Colonic mucosa (tissue), 4 donors: ENCODE measurements at regions of chr14 and their contacts with region 1.

Region 1: GRCh38 chr14:49892636-49893308 is at the start of gene ARF6:
- DNase-seq: peak; percentile 99
- H3K4me3 ChIP-seq: peak within 1 kb of the TSS; percentile 92
- H3K27ac ChIP-seq: peak within 1 kb of the TSS; percentile 100
- H3K4me1 ChIP-seq: peaks cover 3% of the 10 kb centered on the region
- H3K27me3 ChIP-seq: no peaks in the 10 kb centered on the region
- CTCF ChIP-seq: no peak
- total RNA-seq, gene ARF6: 136 to 161 TPM

Region 2: GRCh38 chr14:49808780-49809179 is 84.0 kb before region 1 on chr14:
- intact Hi-C with region 1: no loop called
- DNase-seq: no peak
- H3K4me3 ChIP-seq: no peak overlapping the region
- H3K27ac ChIP-seq: no peak overlapping the region
- H3K4me1 ChIP-seq: no peaks in the 10 kb centered on the region
- H3K27me3 ChIP-seq: no peaks in the 10 kb centered on the region
- CTCF ChIP-seq: no peak

Region 3: DNA sequence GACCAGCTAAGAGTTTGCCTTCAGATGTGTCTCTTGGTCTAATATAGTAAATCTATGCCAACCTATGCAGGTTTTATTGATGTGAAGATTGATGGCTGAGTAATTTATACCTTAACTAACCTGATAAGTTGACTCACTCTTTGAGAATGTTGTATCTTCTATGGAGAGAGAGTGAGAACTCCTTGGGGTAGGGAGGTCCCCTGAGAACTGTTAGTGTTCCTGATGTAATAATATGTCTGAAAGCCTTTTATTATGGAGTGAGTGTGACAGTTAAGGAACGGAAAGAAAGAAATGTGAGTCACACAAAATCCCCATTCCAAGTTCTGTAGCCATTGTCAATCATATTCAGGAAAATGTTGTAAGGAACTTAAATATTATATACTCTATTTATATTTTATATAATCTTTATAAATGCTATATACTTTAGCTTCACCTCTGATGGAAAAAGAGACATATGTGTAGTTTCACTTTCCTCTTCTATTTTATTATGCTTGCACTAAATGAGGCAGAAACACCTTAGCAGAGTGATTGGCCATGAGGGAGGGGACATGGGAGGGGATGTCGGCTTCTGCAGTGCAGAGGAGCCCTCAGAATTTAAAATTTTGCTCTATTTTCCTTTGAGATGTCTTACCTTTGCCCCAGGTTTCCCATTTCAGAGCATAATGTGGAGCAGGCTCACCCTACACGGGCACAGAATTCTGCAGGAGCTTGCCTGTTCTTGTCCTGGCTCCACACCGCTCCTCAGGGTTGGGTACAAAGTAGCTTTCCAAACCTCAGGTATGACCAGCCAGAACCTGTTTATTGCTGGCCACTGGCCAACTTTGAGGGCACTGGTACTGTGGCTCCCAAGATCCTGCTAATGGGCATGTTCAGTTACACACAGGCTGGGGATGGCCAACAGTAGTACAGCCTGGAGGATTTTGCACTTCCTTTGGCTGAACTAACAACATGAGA is 57.8 kb after region 1 on chr14:
- intact Hi-C with region 1: loop called (anchors 5 kb)
- DNase-seq: peak; percentile 93
- H3K4me3 ChIP-seq: no peak overlapping the region
- H3K27ac ChIP-seq: peak overlapping the region; percentile 82
- H3K4me1 ChIP-seq: peaks cover 8% of the 10 kb centered on the region
- H3K27me3 ChIP-seq: no peaks in the 10 kb centered on the region
- CTCF ChIP-seq: no peak

Region 4: DNA sequence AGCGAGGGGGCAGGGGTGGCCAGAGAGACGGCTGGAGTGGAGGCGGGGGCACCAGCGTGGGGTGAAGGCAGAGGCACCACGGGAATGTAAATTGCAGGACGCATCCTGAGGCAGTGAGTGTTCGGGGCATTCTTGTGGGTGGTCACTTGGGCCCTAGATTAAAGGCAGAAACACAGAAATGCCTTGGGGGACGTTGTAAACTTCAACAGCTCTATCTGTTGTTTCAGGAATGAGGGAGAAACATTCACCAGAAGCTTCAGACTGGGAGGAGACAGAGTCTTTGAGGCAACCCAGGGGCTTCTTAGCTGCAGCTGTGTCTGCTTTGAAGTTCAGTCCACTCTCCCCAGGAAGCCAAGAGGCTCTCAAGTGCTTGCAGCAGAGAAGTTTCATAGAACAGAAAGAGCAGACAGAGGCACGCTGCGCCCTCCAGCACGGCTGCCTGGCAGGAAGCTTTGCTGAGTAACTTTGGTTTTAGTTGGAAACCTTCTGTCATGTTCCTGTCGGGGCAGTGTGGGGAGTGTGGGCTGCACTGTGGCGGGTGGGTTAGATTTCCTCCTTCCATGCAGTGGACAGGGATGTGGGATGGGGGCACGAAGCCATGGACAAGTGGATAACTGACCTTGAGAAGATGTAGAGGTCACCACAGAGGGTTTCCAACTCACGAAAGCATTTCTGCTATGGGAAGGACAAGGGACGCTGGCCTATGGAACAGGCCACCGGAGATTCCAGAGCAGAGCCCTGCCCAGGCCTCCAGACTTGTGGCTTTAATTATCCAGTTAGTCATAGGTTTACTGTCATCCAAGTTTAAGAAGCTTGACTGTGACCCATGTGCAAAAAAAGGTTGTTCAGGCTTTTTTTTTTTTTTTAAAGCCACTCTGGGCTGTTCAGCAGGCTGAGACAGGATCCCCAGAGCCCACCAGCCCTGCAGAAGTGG is 107.7 kb after region 1 on chr14:
- intact Hi-C with region 1: loop called (anchors 2 kb)
- DNase-seq: peak; percentile 63
- H3K4me3 ChIP-seq: no peak overlapping the region
- H3K27ac ChIP-seq: peak overlapping the region; percentile 93
- H3K4me1 ChIP-seq: peaks cover 32% of the 10 kb centered on the region
- H3K27me3 ChIP-seq: no peaks in the 10 kb centered on the region
- CTCF ChIP-seq: no peak